Panc1 (cell line): ENCODE measurements at regions of chr12 and their contacts with region 1.

Region 1: GRCh38 chr12:106814714-106815113 is 40.2 kb downstream of the RIC8B start:
- DNase-seq: no peak
- ATAC-seq: no peak
- H3K4me3 ChIP-seq: no peak overlapping the region
- H3K27ac ChIP-seq: no peak overlapping the region
- H3K4me1 ChIP-seq: no peaks in the 10 kb centered on the region
- H3K27me3 ChIP-seq: no peaks in the 10 kb centered on the region
- CTCF ChIP-seq: no peak

Region 2: DNA sequence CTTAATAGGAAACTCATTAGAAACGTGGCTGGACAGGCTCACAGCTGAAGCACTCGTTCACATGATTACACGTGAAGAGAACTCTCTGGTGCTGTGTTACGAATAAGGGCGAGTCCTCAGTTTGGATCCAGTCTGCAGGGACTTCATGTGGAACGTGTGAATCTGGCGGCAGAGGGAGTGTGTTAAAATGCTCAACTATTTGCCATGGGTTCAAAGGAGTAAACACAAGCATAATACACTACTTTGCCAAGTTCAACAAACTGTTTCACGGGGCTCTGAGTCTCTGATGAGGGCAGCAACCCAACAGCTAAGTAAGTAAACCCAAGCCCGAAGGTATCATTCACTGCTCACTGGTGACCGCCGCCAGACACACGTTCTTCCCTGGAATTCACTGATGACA is 718.3 kb before region 1 on chr12:
- CTCF ChIA-PET with region 1: no interaction called
- POLR2A ChIA-PET with region 1: interaction called, 10 read pairs
- in situ Hi-C with region 1: no loop called
- intact Hi-C with region 1: no loop called
- DNase-seq: peak; percentile 70
- ATAC-seq: peak; percentile 82
- H3K4me3 ChIP-seq: no peak overlapping the region
- H3K27ac ChIP-seq: peak overlapping the region; percentile 80
- H3K4me1 ChIP-seq: peaks cover 56% of the 10 kb centered on the region
- H3K27me3 ChIP-seq: no peaks in the 10 kb centered on the region
- CTCF ChIP-seq: no peak

Region 3: DNA sequence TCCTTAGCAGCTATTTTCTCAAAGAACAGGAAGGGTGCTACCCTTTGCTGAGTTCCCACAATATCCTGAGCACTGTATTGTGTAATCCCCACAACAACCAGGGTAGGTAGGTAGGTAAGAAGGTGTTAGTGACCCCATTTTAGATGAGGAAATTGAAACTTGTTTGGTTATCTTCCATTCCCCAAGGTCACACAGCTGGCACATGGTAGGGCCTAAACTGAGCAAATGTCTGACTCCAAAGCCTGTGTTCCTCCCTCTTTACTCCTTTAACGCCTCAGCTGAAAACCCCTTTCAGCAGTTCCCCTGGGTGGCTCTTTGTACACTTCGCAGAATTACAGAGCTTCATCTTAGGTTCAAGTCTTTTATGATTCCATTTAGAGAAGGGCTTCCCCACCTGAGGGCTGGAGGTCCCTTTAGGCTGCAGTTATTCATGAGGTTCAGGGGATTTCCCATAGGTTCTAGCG is 66.7 kb before region 1 on chr12:
- CTCF ChIA-PET with region 1: no interaction called
- POLR2A ChIA-PET with region 1: interaction called, 12 read pairs
- in situ Hi-C with region 1: no loop called
- intact Hi-C with region 1: no loop called
- DNase-seq: no peak
- ATAC-seq: no peak
- H3K4me3 ChIP-seq: no peak overlapping the region
- H3K27ac ChIP-seq: no peak overlapping the region
- H3K4me1 ChIP-seq: no peaks in the 10 kb centered on the region
- H3K27me3 ChIP-seq: peaks cover 15% of the 10 kb centered on the region; the same call in 1 of the 2 replicates
- CTCF ChIP-seq: no peak